PC-9 (cell line): ENCODE measurements at regions of chr7 and their contacts with region 1.

Region 1: DNA sequence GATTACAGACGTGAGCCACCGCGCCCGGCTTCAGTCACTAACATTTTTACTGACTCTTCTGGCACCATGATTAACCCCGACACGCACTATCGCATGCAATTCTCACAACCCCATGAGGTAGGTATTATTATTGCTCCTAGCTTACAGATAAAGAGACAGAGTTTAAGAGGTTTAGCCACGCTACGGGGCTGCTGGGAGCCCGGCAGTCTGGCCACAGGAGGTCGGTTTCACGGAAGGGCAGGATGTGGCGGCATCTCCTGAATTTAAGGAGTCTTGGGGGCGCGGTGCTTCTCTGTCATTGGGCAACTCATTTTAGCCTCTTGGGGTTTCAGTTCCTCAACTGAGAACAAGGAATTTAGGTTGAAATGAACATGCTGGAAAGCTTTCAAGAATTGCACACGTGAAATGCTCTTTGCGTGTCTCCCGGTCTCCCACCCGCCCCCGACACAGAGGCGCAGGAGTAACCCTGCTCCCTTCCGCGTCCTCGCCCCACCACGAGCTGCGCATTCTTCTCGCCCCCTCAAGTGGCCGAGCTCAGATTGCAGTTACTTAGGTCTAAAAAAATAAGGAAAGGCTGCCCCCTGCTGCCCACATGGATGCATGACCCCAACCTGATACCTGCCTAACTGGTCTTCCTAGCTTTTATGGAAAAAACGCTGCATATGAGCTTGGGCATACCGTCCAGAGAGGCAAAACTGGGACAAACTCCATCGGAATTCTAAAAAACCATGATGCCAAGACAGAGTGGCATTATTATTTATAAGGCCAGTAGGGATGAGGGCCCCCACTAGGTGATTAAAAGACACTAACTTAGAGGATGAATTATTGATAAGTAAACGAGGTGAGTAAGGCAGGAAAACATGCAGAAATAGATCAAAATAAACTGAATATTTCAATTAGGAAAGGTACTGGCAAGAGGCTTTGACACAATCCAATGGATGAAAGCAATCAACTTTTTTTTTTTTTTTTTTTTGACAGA is 12.4 kb downstream of the PRSS2 start:
- DNase-seq: peak; percentile 88 to 93
- H3K4me3 ChIP-seq: peak overlapping the region; percentile 41; the same call in 1 of the 2 replicates
- H3K27ac ChIP-seq: no peak overlapping the region
- H3K4me1 ChIP-seq: peaks cover 10% of the 10 kb centered on the region
- H3K27me3 ChIP-seq: no peaks in the 10 kb centered on the region
- CTCF ChIP-seq: peak; percentile 99

Region 2: GRCh38 chr7:141975806-141976523 is 807.2 kb before region 1 on chr7:
- CTCF ChIA-PET with region 1: interaction called, 5 read pairs
- POLR2A ChIA-PET with region 1: no interaction called
- intact Hi-C with region 1: loop called (anchors 5 kb)
- DNase-seq: peak; percentile 44 to 86
- H3K4me3 ChIP-seq: no peak overlapping the region
- H3K27ac ChIP-seq: no peak overlapping the region
- H3K4me1 ChIP-seq: no peaks in the 10 kb centered on the region; the same call in 1 of the 2 replicates
- H3K27me3 ChIP-seq: no peaks in the 10 kb centered on the region
- CTCF ChIP-seq: peak; percentile 96

Region 3: DNA sequence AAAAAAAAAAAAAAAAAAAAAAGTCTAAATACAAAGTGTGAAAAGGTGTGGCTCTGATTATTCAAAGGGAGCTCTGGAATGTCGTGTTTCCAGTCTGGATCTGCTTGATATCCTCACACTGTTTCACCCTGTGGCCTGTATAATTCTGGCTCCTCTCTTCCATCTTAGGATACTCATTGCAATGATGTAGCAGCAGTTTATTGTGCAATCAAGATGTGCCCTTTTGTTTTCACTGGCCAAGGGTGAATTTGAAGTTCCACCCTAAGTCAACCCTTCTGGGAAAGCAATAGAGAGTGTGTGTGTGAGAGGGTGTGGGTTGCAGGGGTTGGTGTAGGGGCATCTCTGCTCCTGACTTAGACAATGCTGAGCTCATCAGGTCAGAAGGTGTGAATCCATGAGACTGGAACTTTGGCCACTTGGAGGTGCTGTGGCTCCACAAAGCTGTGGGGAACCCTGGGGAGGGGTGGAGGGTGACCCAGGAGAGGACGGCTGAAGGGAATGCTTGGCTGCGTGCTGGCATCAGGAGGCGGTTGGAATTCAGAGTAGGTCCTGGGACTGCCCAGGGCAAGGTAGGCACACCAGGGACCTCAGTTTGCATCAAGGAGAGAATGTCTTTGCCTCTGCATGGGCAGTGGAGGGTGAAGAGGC is 407.4 kb before region 1 on chr7:
- CTCF ChIA-PET with region 1: interaction called, 8 read pairs
- POLR2A ChIA-PET with region 1: interaction called, 22 read pairs
- intact Hi-C with region 1: loop called (anchors 1 kb)
- DNase-seq: peak; percentile 99 to 100
- H3K4me3 ChIP-seq: peak overlapping the region; percentile 8; the same call in 1 of the 2 replicates
- H3K27ac ChIP-seq: peak overlapping the region; percentile 87
- H3K4me1 ChIP-seq: peaks cover 54% of the 10 kb centered on the region
- H3K27me3 ChIP-seq: no peaks in the 10 kb centered on the region
- CTCF ChIP-seq: peak; percentile 97

Region 4: GRCh38 chr7:142445019-142445686 is 338.1 kb before region 1 on chr7:
- CTCF ChIA-PET with region 1: no interaction called
- POLR2A ChIA-PET with region 1: no interaction called
- intact Hi-C with region 1: no loop called
- DNase-seq: no peak
- H3K4me3 ChIP-seq: no peak overlapping the region
- H3K27ac ChIP-seq: no peak overlapping the region
- H3K4me1 ChIP-seq: peaks cover 26% of the 10 kb centered on the region
- H3K27me3 ChIP-seq: no peaks in the 10 kb centered on the region
- CTCF ChIP-seq: no peak

Region 5: DNA sequence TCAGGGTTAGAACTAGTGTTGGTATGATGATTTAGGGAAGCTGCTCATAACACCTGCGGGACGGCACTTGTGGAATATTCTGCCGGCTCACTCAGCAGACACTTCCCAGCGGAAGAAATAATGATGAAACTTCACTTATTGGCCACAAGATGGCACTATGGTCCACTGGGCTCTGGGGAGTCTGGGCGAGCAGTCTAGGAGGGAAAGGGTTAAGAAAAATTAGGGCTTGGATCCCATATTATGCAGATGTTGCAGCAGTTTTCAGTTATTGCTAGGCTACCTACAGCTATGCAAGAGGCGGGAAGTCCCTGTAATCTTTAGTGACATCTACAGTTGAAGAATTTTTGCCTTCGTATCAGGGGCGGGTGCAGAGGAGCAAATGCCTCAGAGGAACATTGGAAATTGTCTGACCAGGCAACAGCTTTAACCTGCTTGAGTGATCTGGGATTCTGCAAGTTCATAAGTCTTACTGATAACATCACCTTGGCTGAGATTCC is 286.6 kb before region 1 on chr7:
- CTCF ChIA-PET with region 1: interaction called, 3 read pairs
- POLR2A ChIA-PET with region 1: no interaction called
- intact Hi-C with region 1: loop called (anchors 1 kb)
- DNase-seq: peak; percentile 84 to 98
- H3K4me3 ChIP-seq: peak overlapping the region; percentile 22; the same call in 1 of the 2 replicates
- H3K27ac ChIP-seq: peak overlapping the region; percentile 74
- H3K4me1 ChIP-seq: peaks cover 51% of the 10 kb centered on the region
- H3K27me3 ChIP-seq: no peaks in the 10 kb centered on the region
- CTCF ChIP-seq: peak; percentile 95

Region 6: DNA sequence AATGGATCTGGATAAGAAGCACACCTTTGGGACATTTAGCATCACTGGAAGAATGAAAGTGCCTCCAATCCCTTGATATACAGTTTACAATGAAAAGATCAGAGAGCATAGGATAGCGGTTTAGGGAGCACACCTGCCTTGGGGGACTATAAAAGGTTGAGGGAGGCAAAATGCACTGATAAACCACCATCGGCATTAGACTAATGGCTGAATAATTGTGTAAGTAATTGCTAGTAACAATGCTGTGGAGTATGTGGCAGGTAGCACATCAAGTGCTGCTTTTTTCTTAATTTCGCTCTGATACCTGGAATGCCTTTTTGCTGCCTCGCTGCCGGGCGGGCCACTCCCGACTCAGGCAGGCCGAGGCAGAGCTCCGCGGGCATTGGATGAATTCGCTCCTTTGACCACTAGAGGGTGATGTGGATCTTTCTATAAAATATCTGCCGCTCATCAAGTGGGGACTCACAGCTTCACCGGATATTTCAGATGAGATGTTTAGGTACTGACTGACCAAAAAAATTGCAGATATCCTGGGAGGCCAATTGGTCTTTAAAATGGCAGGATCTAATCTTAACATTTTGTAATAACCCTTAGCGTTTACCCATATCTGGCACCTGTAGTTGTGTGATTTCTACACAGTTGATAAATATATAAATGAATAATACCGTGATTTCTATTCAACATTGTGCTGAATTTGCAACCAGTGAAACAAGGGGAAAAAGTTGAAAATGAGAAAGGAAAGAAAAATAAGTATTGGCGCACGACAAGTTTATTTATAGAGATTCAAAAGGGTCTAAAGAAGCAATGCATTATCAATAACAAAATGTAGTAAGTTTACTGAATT is 150.7 kb before region 1 on chr7:
- CTCF ChIA-PET with region 1: interaction called, 18 read pairs
- POLR2A ChIA-PET with region 1: no interaction called
- intact Hi-C with region 1: loop called (anchors 1 kb)
- DNase-seq: peak; percentile 70 to 72
- H3K4me3 ChIP-seq: no peak overlapping the region
- H3K27ac ChIP-seq: no peak overlapping the region
- H3K4me1 ChIP-seq: no peaks in the 10 kb centered on the region
- H3K27me3 ChIP-seq: no peaks in the 10 kb centered on the region
- CTCF ChIP-seq: peak; percentile 93

Region 7: DNA sequence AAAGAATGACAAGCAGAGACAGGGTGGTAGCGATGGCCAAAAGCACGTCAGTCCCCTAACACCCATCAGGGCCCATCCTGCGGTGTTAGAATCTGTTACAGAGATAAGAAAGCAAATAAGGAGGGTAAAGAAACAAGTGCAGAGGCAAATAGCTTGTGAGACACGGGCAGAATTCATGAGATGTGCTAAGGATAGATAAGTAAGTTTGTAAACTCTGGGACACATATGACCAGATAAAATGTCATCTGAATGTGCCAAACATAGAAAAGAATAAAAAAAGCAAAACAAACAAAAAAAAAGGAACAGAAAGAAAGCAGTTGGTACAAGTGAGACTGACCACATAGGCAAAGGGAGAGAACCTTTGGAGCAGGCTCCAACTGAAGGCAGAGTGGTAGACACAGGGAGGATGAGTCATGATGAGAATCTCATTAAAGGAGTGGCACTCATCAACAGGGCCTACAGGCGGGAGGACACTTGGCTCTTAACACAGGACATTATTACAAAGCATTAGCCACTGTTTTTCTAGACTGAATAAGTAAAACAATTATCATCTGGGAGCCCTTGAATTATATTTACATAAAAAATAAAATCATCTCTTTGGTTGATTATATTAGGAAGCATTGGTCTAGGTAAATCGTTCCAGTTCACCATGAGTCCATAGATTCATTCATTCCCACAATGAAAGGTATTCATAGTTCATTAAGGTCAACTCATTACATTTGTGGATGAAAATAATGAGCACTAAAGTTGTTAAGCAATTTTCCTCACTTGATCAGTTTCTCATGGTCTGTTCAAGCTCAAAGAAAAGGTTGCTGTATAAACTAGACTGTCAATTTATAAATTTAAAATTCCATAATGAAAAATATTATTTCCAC is 50.2 kb after region 1 on chr7:
- CTCF ChIA-PET with region 1: no interaction called
- POLR2A ChIA-PET with region 1: no interaction called
- intact Hi-C with region 1: no loop called
- DNase-seq: no peak
- H3K4me3 ChIP-seq: no peak overlapping the region
- H3K27ac ChIP-seq: peak overlapping the region; percentile 54; the same call in 1 of the 2 replicates
- H3K4me1 ChIP-seq: peaks cover 36% of the 10 kb centered on the region
- H3K27me3 ChIP-seq: no peaks in the 10 kb centered on the region
- CTCF ChIP-seq: no peak

Region 8: GRCh38 chr7:142853739-142854371 is 70.6 kb after region 1 on chr7:
- CTCF ChIA-PET with region 1: interaction called, 3 read pairs
- POLR2A ChIA-PET with region 1: no interaction called
- intact Hi-C with region 1: loop called (anchors 2 kb)
- DNase-seq: peak; percentile 78 to 85
- H3K4me3 ChIP-seq: peak overlapping the region; percentile 95
- H3K27ac ChIP-seq: peak overlapping the region; percentile 83
- H3K4me1 ChIP-seq: peaks cover 40% of the 10 kb centered on the region
- H3K27me3 ChIP-seq: no peaks in the 10 kb centered on the region
- CTCF ChIP-seq: peak; percentile 92